Activated CD8-positive, alpha-beta T cell treated with anti-CD3 and anti-CD28 coated beads, Interleukin-2, amount 10 ng/mL, durations not matched to agents 7 days and 5 days (primary cell): ENCODE measurements at regions of chr2 and their contacts with region 1.

Region 1: DNA sequence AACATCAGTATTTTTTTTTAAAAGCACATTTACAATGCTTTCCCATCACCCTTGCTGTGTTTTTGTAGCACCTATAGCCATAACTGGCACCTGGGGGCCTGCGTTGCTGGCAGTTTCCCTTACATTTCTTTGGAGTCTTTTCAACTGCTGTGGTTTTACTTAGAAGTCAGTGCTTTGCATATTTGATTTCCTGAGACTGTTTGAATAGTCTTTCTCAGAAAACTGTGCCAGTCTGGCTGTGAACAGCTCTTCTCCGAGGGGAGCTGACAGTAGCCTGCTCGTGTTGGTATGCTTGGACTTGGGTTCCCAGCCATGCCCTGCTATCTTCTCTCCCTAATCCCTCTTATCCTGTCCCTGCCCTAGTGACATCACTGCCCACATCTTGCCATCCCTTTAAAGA is 81.5 kb downstream of the DPP4 start:
- DNase-seq: peak; percentile 81
- ATAC-seq: peak; percentile 89
- H3K4me3 Mint-ChIP-seq: peak overlapping the region; percentile 77
- H3K27ac Mint-ChIP-seq: peak overlapping the region; percentile 96
- H3K4me1 Mint-ChIP-seq: peaks cover 83% of the 10 kb centered on the region
- H3K27me3 Mint-ChIP-seq: no peaks in the 10 kb centered on the region

Region 2: GRCh38 chr2:161946489-161947107 is 45.9 kb before region 1 on chr2:
- CTCF ChIA-PET with region 1: interaction called, 16 read pairs
- POLR2A ChIA-PET with region 1: interaction called, 3 read pairs
- DNase-seq: peak; percentile 51
- ATAC-seq: peak; percentile 61
- H3K4me3 Mint-ChIP-seq: no peak overlapping the region
- H3K27ac Mint-ChIP-seq: no peak overlapping the region
- H3K4me1 Mint-ChIP-seq: peaks cover 36% of the 10 kb centered on the region
- H3K27me3 Mint-ChIP-seq: peaks cover 4% of the 10 kb centered on the region

Region 3: GRCh38 chr2:162007447-162008040 is 15.0 kb after region 1 on chr2:
- CTCF ChIA-PET with region 1: interaction called, 71 read pairs
- POLR2A ChIA-PET with region 1: interaction called, 49 read pairs
- DNase-seq: no peak
- ATAC-seq: no peak
- H3K4me3 Mint-ChIP-seq: no peak overlapping the region
- H3K27ac Mint-ChIP-seq: no peak overlapping the region
- H3K4me1 Mint-ChIP-seq: peaks cover 77% of the 10 kb centered on the region
- H3K27me3 Mint-ChIP-seq: no peaks in the 10 kb centered on the region

Region 4: DNA sequence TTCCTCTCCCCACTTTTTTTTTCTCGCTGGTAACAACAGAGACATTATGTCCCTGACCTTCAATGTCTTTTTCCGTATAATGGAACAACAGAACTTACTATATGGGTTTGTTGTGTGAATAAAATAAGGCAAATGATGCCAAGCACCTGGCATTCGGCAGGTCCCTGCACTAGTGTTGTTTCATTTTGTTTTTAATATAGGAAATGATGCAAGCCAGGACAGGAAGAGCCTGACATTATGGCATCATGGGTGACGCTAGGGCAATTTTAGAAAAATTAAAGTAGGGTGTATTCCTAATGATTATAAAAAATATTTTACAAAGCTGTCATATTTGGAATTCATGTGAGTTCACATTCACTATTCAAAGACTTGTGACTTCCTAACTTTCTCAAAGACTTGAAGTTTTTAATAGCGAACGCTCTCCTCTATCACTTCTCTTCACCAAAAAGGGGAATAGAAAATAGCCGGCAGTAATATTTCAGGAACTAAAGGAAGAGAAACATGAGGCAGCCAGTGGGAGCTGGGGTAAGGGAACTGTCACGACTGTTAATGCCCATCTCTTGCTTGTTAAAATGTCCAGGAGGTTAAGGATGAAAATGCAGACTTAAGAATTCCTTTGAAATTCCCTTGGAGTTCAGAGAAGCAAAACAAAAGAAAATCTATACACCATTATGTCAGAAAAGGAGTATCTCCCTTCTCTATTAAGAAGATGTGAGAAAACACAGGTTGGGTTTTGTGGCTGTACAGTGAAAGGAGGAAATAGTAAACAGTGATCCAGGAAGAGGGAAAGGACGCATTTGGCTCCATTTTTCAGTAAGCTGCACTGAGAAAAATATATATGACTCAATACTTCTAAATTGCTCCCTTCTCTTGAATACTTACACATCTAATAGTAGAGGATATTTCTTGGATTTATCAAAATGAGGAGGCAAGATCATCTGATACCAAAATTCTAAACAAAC is 21.3 kb after region 1 on chr2:
- CTCF ChIA-PET with region 1: interaction called, 20 read pairs
- POLR2A ChIA-PET with region 1: interaction called, 49 read pairs
- DNase-seq: no peak
- ATAC-seq: no peak
- H3K4me3 Mint-ChIP-seq: peak overlapping the region; percentile 39
- H3K27ac Mint-ChIP-seq: peak overlapping the region; percentile 93
- H3K4me1 Mint-ChIP-seq: peaks cover 79% of the 10 kb centered on the region
- H3K27me3 Mint-ChIP-seq: no peaks in the 10 kb centered on the region